PC-3 (cell line): ENCODE measurements at regions of chr18 and their contacts with region 1.

Region 1: GRCh38 chr18:9614401-9615279 is at the start of gene PPP4R1:
- DNase-seq: peak; percentile 72
- ATAC-seq: peak; percentile 42
- H3K4me3 ChIP-seq: peak within 1 kb of the TSS; percentile 78
- H3K27ac ChIP-seq: peak within 1 kb of the TSS; percentile 95
- H3K4me1 ChIP-seq: peaks cover 68% of the 10 kb centered on the region
- H3K27me3 ChIP-seq: no peaks in the 10 kb centered on the region
- CTCF ChIP-seq: no peak
- total RNA-seq, gene PPP4R1: 154 and 185 TPM in 2 replicates

Region 2: DNA sequence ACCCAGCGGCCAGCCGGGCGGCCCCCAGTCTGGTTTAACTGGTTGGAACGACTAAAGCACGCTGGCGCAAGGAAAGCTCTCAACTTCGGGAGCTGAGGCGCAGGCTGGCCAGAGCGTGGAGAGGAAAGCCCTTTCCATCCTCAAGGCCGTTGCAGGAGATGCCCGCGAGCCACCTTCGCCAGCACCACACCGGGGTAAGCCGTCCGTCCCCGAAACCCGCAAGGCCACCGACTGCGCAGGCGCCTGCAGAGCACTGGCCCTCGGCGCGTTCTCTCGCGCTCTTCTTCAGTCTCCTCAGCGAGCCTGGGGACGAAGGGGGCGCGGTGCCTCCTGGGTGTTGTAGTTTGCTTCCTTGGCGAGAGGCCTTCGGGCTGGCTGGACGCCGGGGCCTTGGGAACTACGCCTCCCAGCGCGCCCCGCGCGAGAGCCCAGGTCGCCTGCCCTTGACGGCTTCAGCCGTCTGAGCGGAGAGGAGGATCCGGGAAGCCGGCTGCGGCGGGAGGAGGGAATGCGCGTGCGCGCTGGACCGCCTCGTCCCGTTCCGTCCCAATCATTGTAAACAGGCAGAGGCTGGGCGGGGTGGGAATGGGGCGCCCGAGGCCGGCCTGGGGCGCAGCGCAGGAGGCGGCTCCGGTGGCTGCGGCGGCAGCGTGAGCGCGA is 139.5 kb before region 1 on chr18 and contains the start of gene RALBP1:
- CTCF ChIA-PET with region 1: no interaction called
- POLR2A ChIA-PET with region 1: no interaction called
- intact Hi-C with region 1: no loop called
- DNase-seq: peak; percentile 99
- ATAC-seq: peak; percentile 93
- H3K4me3 ChIP-seq: peak within 1 kb of the TSS; percentile 93
- H3K27ac ChIP-seq: peak within 1 kb of the TSS; percentile 92
- H3K4me1 ChIP-seq: peaks cover 15% of the 10 kb centered on the region
- H3K27me3 ChIP-seq: no peaks in the 10 kb centered on the region
- CTCF ChIP-seq: peak; percentile 33
- total RNA-seq, gene RALBP1: 89.8 and 94.3 TPM in 2 replicates

Region 3: GRCh38 chr18:9575558-9575957 is 39.1 kb before region 1 on chr18:
- CTCF ChIA-PET with region 1: interaction called, 9 read pairs
- POLR2A ChIA-PET with region 1: no interaction called
- intact Hi-C with region 1: loop called (anchors 1 kb)
- DNase-seq: peak; percentile 95
- ATAC-seq: peak; percentile 98
- H3K4me3 ChIP-seq: no peak overlapping the region
- H3K27ac ChIP-seq: peak overlapping the region; percentile 2; the same call in 1 of the 2 replicates
- H3K4me1 ChIP-seq: peaks cover 5% of the 10 kb centered on the region; the same call in 1 of the 2 replicates
- H3K27me3 ChIP-seq: no peaks in the 10 kb centered on the region
- CTCF ChIP-seq: peak; percentile 95

Region 4: DNA sequence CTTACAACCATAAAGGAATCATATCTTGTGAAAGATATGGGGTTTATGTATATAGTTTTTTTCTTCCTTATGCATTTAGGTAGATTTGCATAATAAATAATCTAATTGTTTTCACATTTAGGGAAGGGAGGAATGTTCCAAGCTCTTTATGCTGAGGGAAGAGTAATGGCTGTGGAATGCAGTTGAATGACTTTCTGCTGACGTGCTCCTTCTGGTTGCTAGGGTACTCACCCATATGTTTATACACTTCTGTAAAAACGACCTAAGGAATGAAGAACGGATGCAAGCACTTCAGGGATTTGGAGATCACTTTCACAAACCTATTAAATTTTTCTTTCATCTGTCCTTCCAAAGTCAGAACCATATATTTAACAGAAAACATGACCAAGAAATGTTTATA is 28.9 kb after region 1 on chr18:
- CTCF ChIA-PET with region 1: interaction called, 4 read pairs
- POLR2A ChIA-PET with region 1: interaction called, 4 read pairs
- intact Hi-C with region 1: loop called (anchors 1 kb)
- DNase-seq: peak; percentile 98
- ATAC-seq: peak; percentile 93
- H3K4me3 ChIP-seq: peak overlapping the region; percentile 8; the same call in 1 of the 2 replicates
- H3K27ac ChIP-seq: peak overlapping the region; percentile 88
- H3K4me1 ChIP-seq: peaks cover 43% of the 10 kb centered on the region
- H3K27me3 ChIP-seq: no peaks in the 10 kb centered on the region
- CTCF ChIP-seq: no peak

Region 5: GRCh38 chr18:9673296-9674251 is 58.9 kb after region 1 on chr18:
- CTCF ChIA-PET with region 1: interaction called, 13 read pairs
- POLR2A ChIA-PET with region 1: interaction called, 4 read pairs
- intact Hi-C with region 1: loop called (anchors 1 kb)
- DNase-seq: peak; percentile 94
- ATAC-seq: peak; percentile 90
- H3K4me3 ChIP-seq: peak overlapping the region; percentile 3; the same call in 1 of the 2 replicates
- H3K27ac ChIP-seq: peak overlapping the region; percentile 94
- H3K4me1 ChIP-seq: peaks cover 19% of the 10 kb centered on the region
- H3K27me3 ChIP-seq: no peaks in the 10 kb centered on the region
- CTCF ChIP-seq: peak; percentile 65

Region 6: GRCh38 chr18:9722691-9723090 is 108.1 kb after region 1 on chr18:
- CTCF ChIA-PET with region 1: interaction called, 3 read pairs
- POLR2A ChIA-PET with region 1: no interaction called
- intact Hi-C with region 1: loop called (anchors 1 kb)
- DNase-seq: peak; percentile 83
- ATAC-seq: peak; percentile 60
- H3K4me3 ChIP-seq: no peak overlapping the region
- H3K27ac ChIP-seq: no peak overlapping the region
- H3K4me1 ChIP-seq: peaks cover 12% of the 10 kb centered on the region
- H3K27me3 ChIP-seq: no peaks in the 10 kb centered on the region
- CTCF ChIP-seq: peak; percentile 81